ENCODE measurements at regions of chr6 and their contacts with region 1.

Region 1: DNA sequence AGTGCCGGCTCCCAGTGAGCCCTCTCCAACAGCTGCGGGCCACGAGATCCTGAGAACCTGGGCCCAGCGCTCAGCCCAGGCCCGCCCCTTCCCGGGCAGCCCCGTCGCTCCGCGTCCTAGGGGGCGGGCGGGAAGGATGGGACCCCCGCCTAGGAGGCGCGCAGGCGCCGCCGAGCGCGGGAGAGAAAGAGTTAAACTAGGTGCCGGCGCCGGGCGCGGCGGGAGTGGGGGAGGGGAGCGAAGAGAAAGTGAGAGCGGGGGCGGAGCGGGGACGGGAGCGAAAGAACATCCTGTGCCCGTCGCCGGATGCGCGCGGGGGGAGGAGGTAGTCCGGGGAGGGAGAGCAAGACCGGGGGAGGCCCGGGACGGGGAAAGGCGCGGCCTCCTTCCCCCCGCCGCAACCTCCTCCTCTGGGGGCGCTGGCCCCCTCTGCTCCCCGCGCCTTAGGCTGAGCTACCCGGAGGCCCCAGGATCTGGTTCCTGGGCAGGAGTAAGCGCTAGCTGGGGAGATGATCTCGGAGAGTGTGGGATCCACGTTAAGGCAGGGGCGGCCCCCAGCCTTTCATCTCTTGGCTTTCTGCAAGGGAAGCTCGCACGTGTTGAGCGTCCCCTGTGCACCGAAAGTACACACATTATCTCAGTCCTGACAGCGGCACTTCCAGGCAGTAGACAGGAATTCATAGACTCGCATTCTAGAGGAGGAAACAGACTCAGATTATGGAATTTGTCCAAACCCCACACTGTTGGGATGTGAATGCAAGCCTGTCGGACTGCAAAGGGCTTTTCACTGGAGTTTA is 4.9 kb upstream of the ARMC12 start:
- DNase-seq: peak; percentile 97
- H3K4me3 Mint-ChIP-seq: peak overlapping the region; percentile 81
- H3K27ac Mint-ChIP-seq: peak overlapping the region; percentile 89
- H3K4me1 Mint-ChIP-seq: peaks cover 78% of the 10 kb centered on the region
- H3K27me3 Mint-ChIP-seq: no peaks in the 10 kb centered on the region

Region 2: DNA sequence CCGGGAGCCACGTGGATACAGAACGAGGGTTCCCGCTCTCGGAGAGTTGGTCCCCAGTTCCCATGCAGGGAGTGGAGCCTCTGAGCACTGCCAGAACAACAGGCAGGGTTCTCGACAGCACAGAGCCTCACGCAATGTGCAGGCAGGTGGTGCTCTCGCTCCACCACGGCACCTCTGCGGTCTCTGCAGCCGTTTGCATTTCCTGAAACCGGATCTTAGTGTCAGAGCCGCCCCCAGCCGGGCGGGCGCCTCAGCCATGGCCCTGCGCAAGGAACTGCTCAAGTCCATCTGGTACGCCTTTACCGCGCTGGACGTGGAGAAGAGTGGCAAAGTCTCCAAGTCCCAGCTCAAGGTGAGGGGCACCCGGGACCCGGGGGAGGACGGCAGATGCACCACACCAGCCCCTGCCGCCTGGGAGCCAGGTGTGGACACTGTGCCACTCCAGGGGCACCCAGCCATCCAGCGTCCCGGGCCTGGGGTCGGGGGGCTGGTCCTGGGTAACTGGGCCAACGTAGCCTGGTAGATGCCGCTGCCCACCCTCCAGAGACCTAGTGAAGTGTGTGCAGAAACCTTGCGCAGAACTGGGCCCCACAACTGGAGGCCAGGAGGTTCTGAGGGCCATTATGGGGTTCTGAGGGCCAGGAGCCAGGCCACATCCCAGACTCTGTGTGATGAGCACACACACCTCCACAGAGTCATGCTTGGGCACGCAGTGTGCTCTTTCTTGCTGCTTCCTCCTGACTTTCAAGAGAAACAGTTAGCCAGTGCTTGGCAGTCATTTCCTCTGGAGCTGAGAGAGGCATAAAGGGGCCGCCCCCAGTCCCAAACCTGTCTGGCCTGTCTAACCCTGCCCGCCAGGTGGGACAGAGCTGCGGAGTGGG is 434.1 kb before region 1 on chr6 and contains the start of gene DEF6:
- CTCF ChIA-PET with region 1: interaction called, 6 read pairs
- POLR2A ChIA-PET with region 1: no interaction called
- intact Hi-C with region 1: loop called (anchors 5 kb)
- DNase-seq: peak; percentile 95
- H3K4me3 Mint-ChIP-seq: peak within 1 kb of the TSS; percentile 86
- H3K27ac Mint-ChIP-seq: peak within 1 kb of the TSS; percentile 96
- H3K4me1 Mint-ChIP-seq: peaks cover 45% of the 10 kb centered on the region
- H3K27me3 Mint-ChIP-seq: no peaks in the 10 kb centered on the region
- total RNA-seq, gene DEF6: 103 TPM

Region 3: GRCh38 chr6:35427851-35428321 is 304.0 kb before region 1 on chr6:
- CTCF ChIA-PET with region 1: no interaction called
- POLR2A ChIA-PET with region 1: no interaction called
- intact Hi-C with region 1: no loop called
- DNase-seq: no peak
- H3K4me3 Mint-ChIP-seq: no peak overlapping the region
- H3K27ac Mint-ChIP-seq: no peak overlapping the region
- H3K4me1 Mint-ChIP-seq: no peaks in the 10 kb centered on the region
- H3K27me3 Mint-ChIP-seq: no peaks in the 10 kb centered on the region

Region 4: DNA sequence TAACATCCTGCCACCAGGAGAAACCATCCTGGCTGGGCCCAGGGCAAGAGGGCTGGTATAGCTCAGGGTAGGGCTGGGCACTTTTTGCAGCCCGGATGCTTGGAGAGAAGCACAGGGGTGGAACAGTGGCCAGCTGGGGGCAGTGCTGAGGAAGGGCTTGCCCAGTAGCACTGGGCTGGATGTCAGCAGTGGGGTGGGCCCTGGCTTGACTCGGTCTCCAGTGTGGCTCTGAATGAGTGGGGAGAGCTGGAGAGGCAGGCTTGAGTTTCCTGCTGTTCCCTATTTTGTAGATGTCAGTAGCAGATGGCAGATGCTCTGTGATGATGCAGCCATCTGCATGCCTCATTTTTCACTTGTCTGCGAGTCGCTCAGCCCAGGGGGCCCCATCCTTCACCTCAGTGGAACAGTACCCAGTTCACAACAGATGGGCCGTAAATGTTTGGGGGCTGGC is 162.9 kb before region 1 on chr6:
- CTCF ChIA-PET with region 1: interaction called, 62 read pairs
- POLR2A ChIA-PET with region 1: no interaction called
- intact Hi-C with region 1: loop called (anchors 1 kb)
- DNase-seq: peak; percentile 68
- H3K4me3 Mint-ChIP-seq: no peak overlapping the region
- H3K27ac Mint-ChIP-seq: no peak overlapping the region
- H3K4me1 Mint-ChIP-seq: peaks cover 2% of the 10 kb centered on the region
- H3K27me3 Mint-ChIP-seq: peaks cover 3% of the 10 kb centered on the region

Region 5: DNA sequence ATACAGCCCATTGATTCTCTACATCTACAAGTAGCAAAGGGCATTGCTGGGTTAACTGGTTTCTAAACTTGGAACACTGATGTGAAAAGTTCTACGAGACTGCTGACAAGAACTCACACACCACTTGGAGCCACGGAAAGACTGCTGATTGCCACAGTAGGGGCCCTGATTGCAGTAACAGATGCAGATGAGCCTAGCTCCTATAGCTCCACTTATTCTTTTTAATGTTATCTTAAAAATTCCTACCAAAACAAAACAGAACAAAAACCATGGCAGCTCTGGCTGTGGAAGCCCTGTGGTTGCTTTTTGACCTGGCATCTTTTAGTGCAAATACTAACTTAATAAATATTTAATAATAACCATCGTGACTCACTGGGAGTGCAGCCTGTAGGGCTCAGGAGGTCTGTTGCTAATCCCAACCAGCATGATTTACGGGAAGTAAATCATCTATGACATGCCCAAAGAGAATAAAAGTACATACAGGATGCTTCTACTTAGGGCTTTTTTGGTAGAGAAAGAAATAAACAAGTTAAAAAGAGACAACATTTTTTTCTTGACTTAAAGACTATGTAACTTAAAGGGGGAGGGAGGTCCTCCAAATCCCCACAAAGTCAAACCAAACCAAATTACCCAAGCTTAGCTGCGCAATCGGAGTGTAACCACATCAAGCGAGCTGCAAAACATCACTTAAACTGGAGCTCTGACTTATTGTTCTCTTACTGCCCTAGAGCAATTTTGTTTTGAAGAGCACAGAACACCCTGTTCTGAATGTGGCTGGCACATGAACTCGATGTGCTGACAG is 130.4 kb before region 1 on chr6:
- CTCF ChIA-PET with region 1: interaction called, 37 read pairs
- POLR2A ChIA-PET with region 1: no interaction called
- intact Hi-C with region 1: loop called (anchors 2 kb)
- DNase-seq: peak; percentile 76
- H3K4me3 Mint-ChIP-seq: peak overlapping the region; percentile 54
- H3K27ac Mint-ChIP-seq: peak overlapping the region; percentile 80
- H3K4me1 Mint-ChIP-seq: peaks cover 73% of the 10 kb centered on the region
- H3K27me3 Mint-ChIP-seq: no peaks in the 10 kb centered on the region

Region 6: DNA sequence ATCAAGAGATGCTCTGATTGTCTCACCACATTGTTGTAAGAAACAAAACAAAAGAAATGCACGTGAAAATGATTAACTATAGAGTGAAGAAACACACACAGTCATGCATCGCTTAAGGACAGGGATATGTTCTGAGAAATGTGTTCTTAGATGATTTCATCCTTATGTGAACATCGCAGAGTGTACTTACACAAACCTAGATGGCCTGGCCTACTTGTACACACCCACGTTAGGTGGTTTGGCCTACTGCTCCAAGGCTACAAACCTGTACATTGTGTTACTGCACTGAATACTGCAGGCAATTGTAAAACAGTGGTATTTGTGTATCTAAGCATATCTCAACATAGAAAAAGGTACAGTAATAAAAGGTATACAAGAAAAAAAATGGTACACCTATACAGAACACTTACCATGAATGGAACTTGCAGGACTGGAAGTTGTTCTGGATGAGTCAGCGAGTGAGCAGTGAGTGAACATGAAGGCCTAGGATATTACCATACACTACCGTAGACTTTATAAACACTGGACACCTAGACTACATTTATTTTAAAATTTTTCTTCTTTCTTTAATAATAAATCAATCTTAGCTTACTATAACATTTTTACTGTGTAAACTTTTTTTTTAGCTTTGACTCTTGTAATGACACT is 91.8 kb before region 1 on chr6:
- CTCF ChIA-PET with region 1: interaction called, 49 read pairs
- POLR2A ChIA-PET with region 1: interaction called, 3 read pairs
- intact Hi-C with region 1: no loop called
- DNase-seq: no peak
- H3K4me3 Mint-ChIP-seq: no peak overlapping the region
- H3K27ac Mint-ChIP-seq: peak overlapping the region; percentile 55
- H3K4me1 Mint-ChIP-seq: peaks cover 59% of the 10 kb centered on the region
- H3K27me3 Mint-ChIP-seq: no peaks in the 10 kb centered on the region

Region 7: GRCh38 chr6:35681298-35681697 is 50.6 kb before region 1 on chr6:
- CTCF ChIA-PET with region 1: interaction called, 45 read pairs
- POLR2A ChIA-PET with region 1: interaction called, 5 read pairs
- intact Hi-C with region 1: no loop called
- DNase-seq: peak; percentile 75
- H3K4me3 Mint-ChIP-seq: peak overlapping the region; percentile 2
- H3K27ac Mint-ChIP-seq: peak overlapping the region; percentile 66
- H3K4me1 Mint-ChIP-seq: peaks cover 55% of the 10 kb centered on the region
- H3K27me3 Mint-ChIP-seq: no peaks in the 10 kb centered on the region

Region 8: DNA sequence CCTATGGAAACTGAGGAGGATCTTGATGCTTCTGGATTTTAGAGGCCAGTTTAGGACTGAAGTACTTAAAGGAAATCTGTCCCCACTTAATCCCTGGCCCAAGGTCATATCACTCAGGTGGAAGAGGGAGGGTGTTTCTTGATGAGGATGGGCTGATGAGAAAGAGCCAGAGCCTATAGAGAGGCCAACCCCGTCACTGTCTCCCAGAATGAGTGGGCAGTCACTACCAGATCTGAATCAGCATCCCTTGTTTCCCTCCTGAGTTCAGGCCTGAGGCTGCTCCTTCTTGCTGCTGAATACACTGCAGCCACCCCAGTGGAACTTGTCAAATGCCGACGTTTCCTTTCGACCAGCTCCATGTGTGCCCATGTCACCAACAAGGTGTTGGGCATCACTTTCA is 19.7 kb after region 1 on chr6:
- CTCF ChIA-PET with region 1: interaction called, 15 read pairs
- POLR2A ChIA-PET with region 1: interaction called, 4 read pairs
- intact Hi-C with region 1: no loop called
- DNase-seq: peak; percentile 82
- H3K4me3 Mint-ChIP-seq: no peak overlapping the region
- H3K27ac Mint-ChIP-seq: peak overlapping the region; percentile 31
- H3K4me1 Mint-ChIP-seq: peaks cover 22% of the 10 kb centered on the region
- H3K27me3 Mint-ChIP-seq: peaks cover 2% of the 10 kb centered on the region

Region 9: GRCh38 chr6:35876902-35877301 is 145.0 kb after region 1 on chr6:
- CTCF ChIA-PET with region 1: no interaction called
- POLR2A ChIA-PET with region 1: no interaction called
- intact Hi-C with region 1: no loop called
- DNase-seq: no peak
- H3K4me3 Mint-ChIP-seq: no peak overlapping the region
- H3K27ac Mint-ChIP-seq: no peak overlapping the region
- H3K4me1 Mint-ChIP-seq: no peaks in the 10 kb centered on the region
- H3K27me3 Mint-ChIP-seq: no peaks in the 10 kb centered on the region